Right cardiac atrium (tissue), 5 donors: ENCODE measurements at regions of chr9 and their contacts with region 1.

Region 1: DNA sequence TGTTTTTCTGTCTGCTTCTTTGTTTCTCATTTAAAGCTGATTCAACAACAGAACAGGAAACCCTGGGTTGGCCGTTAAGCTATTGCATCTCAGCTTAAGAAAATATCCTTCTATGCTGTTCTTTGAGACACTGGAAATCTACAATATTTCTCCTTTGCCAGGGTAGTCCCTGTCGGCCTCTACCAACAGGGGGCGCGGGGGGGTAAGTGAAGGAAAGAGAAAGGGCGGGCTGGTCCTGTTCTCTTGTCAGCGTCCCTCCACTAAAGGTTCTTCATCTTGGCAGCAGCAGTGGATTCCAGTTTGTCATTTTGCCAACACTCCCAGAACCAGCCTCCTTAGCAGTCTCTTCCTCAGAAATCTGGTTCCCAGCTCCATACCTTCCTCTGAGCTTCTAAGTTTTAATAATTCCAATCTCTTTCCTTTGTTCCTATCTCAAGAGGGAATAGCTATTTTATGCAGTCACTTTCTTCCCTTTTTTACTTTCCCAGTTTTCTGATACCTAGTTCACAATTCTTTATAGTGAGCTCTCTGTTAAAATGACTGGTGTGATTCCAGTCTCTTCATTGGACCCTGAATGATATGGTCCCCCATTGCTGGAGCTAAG is 222.3 kb downstream of the GLIS3 start:
- DNase-seq: peak; percentile 85 to 94 (median 92)
- ATAC-seq: peak; percentile 89 to 90
- H3K4me3 ChIP-seq: no peak overlapping the region
- H3K27ac ChIP-seq: no peak overlapping the region
- H3K4me1 ChIP-seq: peaks cover 1% of the 10 kb centered on the region
- H3K27me3 ChIP-seq: no peaks in the 10 kb centered on the region

Region 2: DNA sequence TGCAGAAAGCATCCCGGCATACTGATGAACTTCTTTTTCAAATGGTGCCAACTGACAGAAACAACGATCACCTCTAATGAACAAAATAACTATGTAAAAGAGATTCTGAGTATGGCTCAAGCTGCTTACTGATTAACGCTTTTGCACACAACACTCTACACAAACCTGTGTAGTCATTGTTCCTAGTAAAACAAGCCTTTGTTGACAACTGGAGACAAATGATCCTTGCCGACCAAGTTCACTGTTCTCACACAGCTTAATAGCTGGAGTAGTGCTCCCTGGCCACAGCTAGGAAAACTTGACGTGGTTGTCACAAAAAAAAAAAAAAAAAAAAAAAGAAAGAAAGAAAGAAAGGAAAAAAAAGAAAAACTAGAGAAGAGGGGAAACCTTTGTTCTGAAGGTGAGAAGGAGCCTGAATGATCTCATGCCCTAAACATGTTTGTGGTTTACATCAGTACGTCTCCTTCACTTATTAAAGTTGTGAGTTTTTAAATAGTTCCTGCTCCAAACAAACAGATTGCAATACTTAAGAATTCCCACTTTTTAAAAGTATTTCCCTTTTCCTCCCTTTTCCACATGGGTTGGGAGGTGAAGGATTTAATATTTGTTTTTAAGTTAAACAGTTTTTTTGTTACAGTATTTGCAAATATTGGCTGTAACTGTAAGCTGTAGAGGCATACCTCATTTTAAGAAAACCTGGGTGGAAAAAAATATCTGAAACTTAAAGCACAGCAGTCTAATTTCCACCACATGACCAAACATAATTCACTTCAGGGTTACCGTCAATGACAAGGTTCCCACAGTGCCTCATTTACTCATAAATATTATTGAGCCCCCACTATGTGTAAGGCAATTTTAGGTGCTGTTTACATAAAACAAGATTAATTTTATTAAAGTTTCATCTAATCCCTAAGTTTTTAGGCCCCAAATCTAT is 158.5 kb after region 1 on chr9:
- intact Hi-C with region 1: loop called in 1 of 4 experiments (anchors 10 kb)
- DNase-seq: no peak
- ATAC-seq: peak in 1 of 2 donors; percentile 67
- H3K4me3 ChIP-seq: no peak overlapping the region
- H3K27ac ChIP-seq: no peak overlapping the region
- H3K4me1 ChIP-seq: no peaks in the 10 kb centered on the region
- H3K27me3 ChIP-seq: no peaks in the 10 kb centered on the region

Region 3: GRCh38 chr9:4563105-4563504 is 485.5 kb after region 1 on chr9:
- intact Hi-C with region 1: no loop called
- DNase-seq: no peak
- ATAC-seq: no peak
- H3K4me3 ChIP-seq: no peak overlapping the region
- H3K27ac ChIP-seq: no peak overlapping the region
- H3K4me1 ChIP-seq: no peaks in the 10 kb centered on the region
- H3K27me3 ChIP-seq: no peaks in the 10 kb centered on the region

Region 4: GRCh38 chr9:4855841-4856240 is 778.2 kb after region 1 on chr9:
- intact Hi-C with region 1: no loop called
- DNase-seq: peak in 2 of 3 donors; percentile 28 to 64
- ATAC-seq: peak; percentile 48 to 59
- H3K4me3 ChIP-seq: no peak overlapping the region
- H3K27ac ChIP-seq: no peak overlapping the region
- H3K4me1 ChIP-seq: no peaks in the 10 kb centered on the region
- H3K27me3 ChIP-seq: no peaks in the 10 kb centered on the region